T-cell (primary cell): ENCODE measurements at regions of chr3 and their contacts with region 1.

Region 1: DNA sequence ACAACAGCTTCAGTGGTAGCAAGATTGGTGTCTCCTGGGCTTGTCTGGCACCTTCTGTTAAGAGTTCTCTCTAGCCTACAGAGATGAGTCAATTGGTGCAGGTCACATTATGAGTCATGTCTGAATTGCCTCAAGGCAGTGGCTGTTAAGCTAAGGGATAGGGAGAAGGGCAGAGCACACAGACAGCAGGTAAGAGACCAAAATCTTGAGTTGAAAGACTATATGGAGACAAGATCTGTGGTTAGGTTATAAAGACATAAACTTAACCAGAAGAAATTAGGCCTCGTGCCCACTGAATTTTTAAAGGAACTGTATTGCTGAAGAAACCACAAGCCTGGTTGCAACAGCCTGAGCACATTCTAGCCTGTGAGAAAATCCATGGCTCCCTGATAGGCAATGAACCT is 19.2 kb upstream of the KPNA1 start:
- DNase-seq: no peak
- ATAC-seq: peak in 3 of 4 experiments; percentile 24 to 87 (median 49)
- H3K4me3 ChIP-seq: no peak overlapping the region
- H3K4me3 Mint-ChIP-seq: no peak overlapping the region
- H3K27ac ChIP-seq: no peak overlapping the region
- H3K27ac Mint-ChIP-seq: peak overlapping the region; percentile 31 to 76
- H3K4me1 ChIP-seq: no peaks in the 10 kb centered on the region
- H3K4me1 Mint-ChIP-seq: peaks cover 6 to 19% (median 9%) of the 10 kb centered on the region in 3 donors
- H3K27me3 ChIP-seq: no peaks in the 10 kb centered on the region
- H3K27me3 Mint-ChIP-seq: no peaks in the 10 kb centered on the region

Region 2: GRCh38 chr3:122635789-122636188 is 101.9 kb after region 1 on chr3:
- CTCF ChIA-PET with region 1: no interaction called
- POLR2A ChIA-PET with region 1: no interaction called
- DNase-seq: no peak
- ATAC-seq: no peak
- H3K4me3 ChIP-seq: no peak overlapping the region
- H3K4me3 Mint-ChIP-seq: no peak overlapping the region
- H3K27ac ChIP-seq: no peak overlapping the region
- H3K27ac Mint-ChIP-seq: peak overlapping the region in 1 of 2 donors; percentile 19
- H3K4me1 ChIP-seq: no peaks in the 10 kb centered on the region
- H3K4me1 Mint-ChIP-seq: peaks cover 0 to 5% (median 5%) of the 10 kb centered on the region in 3 donors
- H3K27me3 ChIP-seq: no peaks in the 10 kb centered on the region
- H3K27me3 Mint-ChIP-seq: no peaks in the 10 kb centered on the region

Region 3: GRCh38 chr3:122697952-122698620 is 164.2 kb after region 1 on chr3:
- CTCF ChIA-PET with region 1: interaction called in 1 of 2 experiments, 10 read pairs
- POLR2A ChIA-PET with region 1: no interaction called
- DNase-seq: peak in 1 of 35 experiments; percentile 8
- ATAC-seq: no peak
- H3K4me3 ChIP-seq: no peak overlapping the region
- H3K4me3 Mint-ChIP-seq: no peak overlapping the region
- H3K27ac ChIP-seq: no peak overlapping the region
- H3K27ac Mint-ChIP-seq: peak overlapping the region in 1 of 2 donors; percentile 1
- H3K4me1 ChIP-seq: no peaks in the 10 kb centered on the region
- H3K4me1 Mint-ChIP-seq: peaks cover 10 to 41% (median 11%) of the 10 kb centered on the region in 3 donors
- H3K27me3 ChIP-seq: no peaks in the 10 kb centered on the region
- H3K27me3 Mint-ChIP-seq: no peaks in the 10 kb centered on the region